ENCODE measurements at regions of chr6 and their contacts with region 1.

Region 1: DNA sequence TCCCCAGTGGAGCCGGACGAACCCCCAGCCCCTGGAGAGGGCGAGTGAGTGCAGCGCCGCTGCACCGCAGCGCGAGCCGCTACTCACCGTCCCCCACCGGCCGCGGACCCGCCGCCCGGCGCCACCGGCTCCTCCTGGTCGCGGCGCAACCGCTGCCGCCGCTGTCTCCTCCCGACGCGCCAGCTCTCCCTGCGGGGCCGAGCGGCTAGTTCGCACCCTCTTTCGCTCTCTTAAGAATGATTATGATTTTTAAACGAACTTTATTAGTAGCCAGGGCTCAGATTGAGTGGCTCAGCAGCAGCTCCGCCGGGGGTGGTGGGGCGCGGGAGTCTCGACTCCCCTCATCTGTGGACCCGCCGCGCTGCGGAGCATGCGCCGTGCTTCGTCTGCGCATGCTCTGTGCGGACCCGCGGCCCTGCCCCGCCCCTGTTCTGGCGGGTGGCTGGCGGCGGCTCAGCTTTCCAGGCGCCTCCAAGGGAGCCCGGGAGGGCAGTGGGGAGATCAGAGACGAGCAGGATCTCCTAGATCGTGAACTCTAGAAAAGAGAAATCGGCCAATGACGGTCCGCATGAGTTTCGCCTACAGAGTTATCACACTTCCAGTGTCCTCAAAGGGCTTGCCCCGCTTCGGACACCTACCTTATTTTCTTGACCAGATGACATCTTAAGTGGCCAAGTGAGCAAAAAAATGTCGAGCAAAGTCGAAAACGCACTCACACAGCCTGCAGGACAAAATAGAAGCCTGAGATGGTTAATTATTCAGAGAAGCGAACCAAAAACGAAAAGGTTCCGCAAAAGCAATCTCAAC is at the start of gene RAB23:
- DNase-seq: peak; percentile 74
- H3K4me3 Mint-ChIP-seq: peak within 1 kb of the TSS; percentile 99
- H3K27ac Mint-ChIP-seq: peak within 1 kb of the TSS; percentile 93
- H3K4me1 Mint-ChIP-seq: peaks cover 14% of the 10 kb centered on the region
- H3K27me3 Mint-ChIP-seq: peaks cover 18% of the 10 kb centered on the region
- total RNA-seq, gene RAB23: 1.1 to 1.7 TPM

Region 2: DNA sequence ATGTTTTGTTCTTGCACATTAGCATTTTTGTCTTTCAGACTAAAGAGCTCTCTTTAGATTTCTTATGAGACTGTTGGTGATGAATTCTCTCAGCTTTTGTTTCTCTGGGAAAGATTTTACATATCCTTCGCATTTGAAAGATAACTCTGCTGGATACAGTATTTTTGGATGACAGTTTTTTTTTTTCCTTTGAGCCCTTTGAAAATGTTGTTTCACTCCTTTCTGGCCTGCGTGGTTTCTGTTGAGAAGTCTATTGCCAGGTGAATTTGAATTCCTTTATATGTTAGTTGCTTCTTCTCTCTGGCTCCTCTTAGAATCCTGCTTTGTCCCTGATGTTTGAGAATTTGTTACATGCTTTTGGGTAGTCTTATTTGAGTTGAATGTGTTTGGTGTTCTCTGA is 197.8 kb before region 1 on chr6:
- CTCF ChIA-PET with region 1: no interaction called
- intact Hi-C with region 1: no loop called
- DNase-seq: no peak
- H3K4me3 Mint-ChIP-seq: no peak overlapping the region
- H3K27ac Mint-ChIP-seq: no peak overlapping the region
- H3K4me1 Mint-ChIP-seq: no peaks in the 10 kb centered on the region
- H3K27me3 Mint-ChIP-seq: peaks cover 9% of the 10 kb centered on the region

Region 3: DNA sequence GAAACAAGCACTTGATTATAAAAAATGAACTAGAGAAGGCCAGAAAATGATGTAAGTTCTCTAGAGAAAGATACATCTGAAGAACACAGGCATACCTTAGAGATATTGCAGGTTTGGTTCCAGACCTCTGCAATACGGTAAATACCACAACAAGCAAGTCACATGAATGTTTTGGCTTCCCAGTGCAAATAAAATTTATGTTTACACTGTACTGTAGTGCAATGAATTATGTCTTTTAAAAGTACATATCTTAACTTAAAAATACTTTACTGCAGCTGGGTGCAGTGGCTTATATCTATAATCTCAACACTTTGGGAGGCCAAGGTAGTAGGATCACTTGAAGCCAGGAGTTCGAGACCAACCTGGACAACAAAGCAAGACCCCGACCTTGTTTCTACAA is 186.6 kb before region 1 on chr6:
- CTCF ChIA-PET with region 1: no interaction called
- intact Hi-C with region 1: no loop called
- DNase-seq: no peak
- H3K4me3 Mint-ChIP-seq: no peak overlapping the region
- H3K27ac Mint-ChIP-seq: no peak overlapping the region
- H3K4me1 Mint-ChIP-seq: no peaks in the 10 kb centered on the region
- H3K27me3 Mint-ChIP-seq: peaks cover 3% of the 10 kb centered on the region

Region 4: DNA sequence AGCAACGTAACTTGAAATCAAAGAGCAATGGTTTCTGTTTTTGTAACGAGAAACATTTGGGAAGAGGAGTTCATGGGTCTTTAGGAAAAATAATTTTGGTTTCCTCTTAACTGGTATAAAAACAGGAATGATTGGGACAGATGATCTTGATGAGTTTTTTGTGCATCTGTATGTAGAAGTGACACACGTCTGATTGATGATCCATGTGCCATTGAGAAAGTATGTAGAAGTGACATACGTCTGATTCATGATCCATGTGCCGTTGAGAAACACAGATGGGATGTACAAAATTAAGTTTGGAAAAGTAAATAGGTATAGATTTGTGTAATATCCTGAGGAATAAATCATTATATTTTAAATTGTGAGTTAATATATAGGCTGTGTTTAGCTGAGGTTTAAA is 173.6 kb before region 1 on chr6:
- CTCF ChIA-PET with region 1: no interaction called
- intact Hi-C with region 1: loop called (anchors 1 kb)
- DNase-seq: no peak
- H3K4me3 Mint-ChIP-seq: peak overlapping the region; percentile 68
- H3K27ac Mint-ChIP-seq: no peak overlapping the region
- H3K4me1 Mint-ChIP-seq: peaks cover 21% of the 10 kb centered on the region
- H3K27me3 Mint-ChIP-seq: peaks cover 14% of the 10 kb centered on the region

Region 5: DNA sequence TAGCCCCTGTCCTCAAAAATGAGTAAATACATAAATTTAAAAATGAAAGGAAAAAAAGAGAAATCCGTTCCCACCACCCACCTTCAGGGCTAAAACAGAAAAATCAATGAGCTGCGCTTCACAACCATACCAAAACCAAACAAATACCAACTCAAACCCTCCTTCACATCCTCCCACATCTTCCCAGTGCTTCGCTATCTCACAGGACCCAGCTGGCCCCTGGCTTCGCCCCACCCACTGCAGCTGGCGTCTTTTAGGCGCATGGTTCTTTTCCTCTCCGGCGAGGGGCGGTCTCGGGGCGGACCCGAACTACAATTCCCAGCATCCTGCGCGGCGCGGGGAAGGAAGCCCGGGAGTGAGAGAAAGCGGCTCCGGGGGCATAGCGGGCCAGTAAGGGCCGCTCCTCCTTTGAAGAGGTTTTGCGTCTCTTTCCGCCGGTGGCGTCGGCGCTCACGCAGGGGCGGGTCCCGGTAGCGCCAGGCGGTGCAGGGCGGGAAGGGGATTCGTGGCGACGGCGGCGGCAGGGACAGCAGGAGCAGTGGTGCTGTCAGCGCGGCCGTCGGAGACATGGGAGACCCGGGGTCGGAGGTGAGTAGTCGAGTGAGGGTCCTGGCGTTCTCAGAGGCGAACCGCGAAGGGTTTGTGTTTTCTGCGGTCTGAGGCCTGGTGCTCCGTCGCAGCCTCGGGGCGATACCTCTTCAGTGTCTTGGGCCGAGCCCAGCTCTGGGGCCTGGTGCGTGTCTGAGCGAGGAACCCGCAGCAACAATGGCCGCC is 132.3 kb before region 1 on chr6 and contains the start of gene ZNF451:
- CTCF ChIA-PET with region 1: no interaction called
- intact Hi-C with region 1: loop called (anchors 1 kb)
- DNase-seq: peak; percentile 98
- H3K4me3 Mint-ChIP-seq: peak within 1 kb of the TSS; percentile 88
- H3K27ac Mint-ChIP-seq: peak within 1 kb of the TSS; percentile 89
- H3K4me1 Mint-ChIP-seq: peaks cover 32% of the 10 kb centered on the region
- H3K27me3 Mint-ChIP-seq: no peaks in the 10 kb centered on the region
- total RNA-seq, gene ZNF451: 43.8 to 46.2 TPM

Region 6: DNA sequence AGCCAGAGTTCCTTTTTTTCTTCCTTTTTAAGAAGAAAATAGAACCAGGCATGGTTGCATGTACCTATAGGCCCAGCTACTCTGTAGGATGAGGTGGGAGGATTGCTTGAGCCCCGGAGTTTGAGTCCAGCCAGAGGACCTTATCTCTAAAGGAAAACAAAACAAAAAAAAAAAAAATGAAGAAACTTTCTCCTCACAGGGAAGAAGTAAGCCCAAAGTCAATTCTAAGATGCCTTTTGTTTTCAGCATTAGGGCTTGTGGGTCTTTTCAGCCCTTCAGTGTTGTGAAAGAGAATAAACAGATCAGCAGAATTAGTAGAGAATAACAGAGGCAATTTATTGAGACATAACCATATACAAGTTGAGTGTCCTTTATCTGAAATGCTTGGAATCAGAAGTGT is 105.4 kb before region 1 on chr6:
- CTCF ChIA-PET with region 1: no interaction called
- intact Hi-C with region 1: no loop called
- DNase-seq: no peak
- H3K4me3 Mint-ChIP-seq: no peak overlapping the region
- H3K27ac Mint-ChIP-seq: no peak overlapping the region
- H3K4me1 Mint-ChIP-seq: peaks cover 11% of the 10 kb centered on the region
- H3K27me3 Mint-ChIP-seq: no peaks in the 10 kb centered on the region

Region 7: GRCh38 chr6:57182017-57182432 is 40.1 kb before region 1 on chr6:
- CTCF ChIA-PET with region 1: no interaction called
- intact Hi-C with region 1: no loop called
- DNase-seq: no peak
- H3K4me3 Mint-ChIP-seq: no peak overlapping the region
- H3K27ac Mint-ChIP-seq: no peak overlapping the region
- H3K4me1 Mint-ChIP-seq: peaks cover 8% of the 10 kb centered on the region
- H3K27me3 Mint-ChIP-seq: no peaks in the 10 kb centered on the region

Region 8: GRCh38 chr6:57207141-57207540 is 15.0 kb before region 1 on chr6:
- CTCF ChIA-PET with region 1: interaction called, 4 read pairs
- intact Hi-C with region 1: loop called (anchors 2 kb)
- DNase-seq: no peak
- H3K4me3 Mint-ChIP-seq: no peak overlapping the region
- H3K27ac Mint-ChIP-seq: no peak overlapping the region
- H3K4me1 Mint-ChIP-seq: peaks cover 9% of the 10 kb centered on the region
- H3K27me3 Mint-ChIP-seq: no peaks in the 10 kb centered on the region